ENCODE measurements at regions of chr12 and their contacts with region 1.

Region 1: GRCh38 chr12:121620328-121620891 is 5.9 kb upstream of the ORAI1 start:
- DNase-seq: no peak
- ATAC-seq: peak in 2 of 4 donors; percentile 22 to 39
- H3K4me3 ChIP-seq: no peak overlapping the region
- H3K27ac ChIP-seq: peak overlapping the region in 1 of 12 donors; percentile 27
- H3K4me1 ChIP-seq: peaks cover 0 to 20% (median 5%) of the 10 kb centered on the region in 12 donors
- H3K27me3 ChIP-seq: no peaks in the 10 kb centered on the region
- CTCF ChIP-seq: no peak
- POLR2A ChIP-seq: no peak

Region 2: GRCh38 chr12:121499929-121500793 is 120.2 kb before region 1 on chr12:
- intact Hi-C with region 1: loop called in 5 of 10 experiments (anchors 5 to 10 kb)
- DNase-seq: peak; percentile 70 to 87 (median 79)
- ATAC-seq: peak; percentile 81 to 90 (median 84)
- H3K4me3 ChIP-seq: peak overlapping the region in 9 of 12 donors; percentile 25 to 52 (median 38)
- H3K27ac ChIP-seq: peak overlapping the region; percentile 20 to 87 (median 72)
- H3K4me1 ChIP-seq: peaks cover 0 to 21% (median 9%) of the 10 kb centered on the region in 12 donors
- H3K27me3 ChIP-seq: no peaks in the 10 kb centered on the region
- CTCF ChIP-seq: peak in 11 of 12 donors; percentile 97 to 99 (median 99)
- POLR2A ChIP-seq: no peak

Region 3: DNA sequence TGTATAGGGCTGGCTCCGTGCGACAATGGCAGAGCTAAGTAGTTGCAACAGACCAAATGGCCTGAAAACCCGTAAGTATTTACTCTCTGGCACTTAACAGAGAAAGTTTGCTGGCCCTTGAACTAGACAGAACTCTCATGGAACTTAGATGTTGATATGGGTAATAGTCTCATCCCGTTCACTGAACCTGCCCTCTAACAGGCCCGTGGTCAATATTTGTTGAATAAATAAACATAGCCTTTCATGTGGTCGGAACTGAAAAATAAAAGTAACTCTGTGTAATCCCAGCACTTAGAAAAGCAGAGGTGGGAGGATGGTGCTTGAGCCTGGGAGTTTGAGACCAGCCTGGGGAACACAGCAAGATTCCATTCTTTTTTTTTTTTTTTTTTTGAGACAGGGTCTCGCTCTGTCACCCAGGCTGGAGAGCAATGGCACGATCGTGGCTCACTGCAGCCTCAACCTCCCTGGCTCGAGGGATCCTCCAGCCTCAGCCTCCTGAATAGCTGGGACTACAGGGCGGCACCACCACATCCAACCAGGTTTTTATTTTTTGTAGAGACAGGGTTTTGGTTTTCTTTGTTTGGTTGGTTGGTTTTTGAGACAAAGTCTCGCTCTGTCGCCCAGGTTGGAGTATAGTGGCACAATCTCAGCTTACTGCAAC is 69.3 kb before region 1 on chr12:
- intact Hi-C with region 1: loop called in 8 of 10 experiments (anchors 2 to 10 kb)
- DNase-seq: no peak
- ATAC-seq: no peak
- H3K4me3 ChIP-seq: no peak overlapping the region
- H3K27ac ChIP-seq: no peak overlapping the region
- H3K4me1 ChIP-seq: peaks cover 0 to 15% (median 0%) of the 10 kb centered on the region in 12 donors
- H3K27me3 ChIP-seq: no peaks in the 10 kb centered on the region
- CTCF ChIP-seq: no peak
- POLR2A ChIP-seq: no peak

Region 4: GRCh38 chr12:121568971-121569751 is 51.2 kb before region 1 on chr12:
- intact Hi-C with region 1: loop called in 1 of 10 experiments (anchors 5 kb)
- DNase-seq: peak in 4 of 5 donors; percentile 44 to 65 (median 58)
- ATAC-seq: peak; percentile 89 to 96 (median 95)
- H3K4me3 ChIP-seq: peak overlapping the region in 1 of 12 donors; percentile 4
- H3K27ac ChIP-seq: peak overlapping the region in 9 of 12 donors; percentile 6 to 63 (median 29)
- H3K4me1 ChIP-seq: peaks cover 0 to 25% (median 15%) of the 10 kb centered on the region in 12 donors
- H3K27me3 ChIP-seq: no peaks in the 10 kb centered on the region
- CTCF ChIP-seq: no peak
- POLR2A ChIP-seq: no peak